GM12878 (cell line): ENCODE measurements at regions of chr5 and their contacts with region 1.

Region 1: DNA sequence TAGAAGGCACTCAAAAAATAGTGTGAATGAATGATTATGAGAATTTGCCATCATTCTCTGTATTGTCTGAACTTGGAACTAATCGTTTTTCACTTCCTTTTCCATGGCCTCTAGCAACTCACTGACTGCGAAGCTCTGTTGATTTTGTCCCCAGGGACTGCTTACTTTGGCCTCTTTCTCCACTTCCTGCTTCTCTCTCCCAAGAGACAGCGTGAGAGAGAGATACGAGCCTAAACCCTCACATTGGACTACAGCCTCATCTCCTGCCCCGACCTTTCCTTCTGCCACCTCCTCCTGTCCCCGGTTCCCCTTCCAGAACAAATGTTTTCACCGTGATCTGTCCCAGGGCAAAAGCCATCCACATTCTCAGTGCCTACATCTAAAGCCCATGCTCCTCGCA is 300.8 kb upstream of the PANK3 start:
- DNase-seq: peak; percentile 83
- ATAC-seq: peak; percentile 92
- H3K4me3 ChIP-seq: no peak overlapping the region
- H3K27ac ChIP-seq: no peak overlapping the region
- H3K4me1 ChIP-seq: peaks cover 5% of the 10 kb centered on the region
- H3K27me3 ChIP-seq: no peaks in the 10 kb centered on the region; a peak in 1 of 4 replicates
- CTCF ChIP-seq: no peak
- EP300 ChIP-seq: peak in 1 of 2 experiments; percentile 65; a peak in 1 of 4 replicates
- POLR2A ChIP-seq: no peak
- RAD21 ChIP-seq: no peak

Region 2: DNA sequence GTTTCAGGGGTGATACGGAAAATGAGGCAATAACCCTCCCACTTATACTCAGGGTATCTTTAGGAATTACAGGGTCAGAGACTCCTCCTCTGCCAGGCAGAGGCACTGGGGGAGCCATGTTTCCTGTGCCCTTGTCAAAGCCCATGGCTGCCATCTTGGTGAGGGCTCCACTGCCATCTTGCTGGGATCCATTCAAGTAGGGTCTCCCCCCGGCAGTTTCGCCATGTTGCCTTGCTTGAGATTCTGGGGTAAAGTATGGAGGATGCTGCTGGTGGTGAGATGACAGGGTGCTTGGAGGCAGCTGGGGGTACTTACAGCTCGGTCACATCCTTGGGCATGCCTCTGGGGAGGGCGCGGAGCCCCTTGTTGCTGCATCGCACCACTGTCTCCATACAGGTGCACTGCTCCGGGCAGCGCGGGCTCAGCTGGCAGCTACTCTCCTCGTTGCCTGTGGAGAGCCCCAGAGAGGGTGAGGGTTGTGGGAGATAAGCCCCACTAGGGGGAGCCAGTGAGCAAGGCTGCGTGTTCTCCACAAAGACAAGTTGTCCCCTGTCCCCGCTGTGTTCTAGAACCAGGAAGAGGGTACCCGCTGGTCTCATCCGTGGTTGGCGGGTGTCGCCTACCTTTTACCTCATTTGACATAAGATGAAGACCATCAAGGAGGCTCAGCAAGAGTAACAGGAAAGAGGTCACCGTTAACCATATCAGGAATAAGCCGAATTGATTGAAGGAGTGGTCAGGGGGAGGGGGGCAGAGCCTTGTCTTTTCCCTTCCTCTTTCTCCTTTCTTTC is 131.7 kb before region 1 on chr5:
- CTCF ChIA-PET with region 1: interaction called, 4 read pairs
- POLR2A ChIA-PET with region 1: interaction called, 3 read pairs
- RAD21 ChIA-PET with region 1: no interaction called
- SMC1A ChIA-PET with region 1: no interaction called
- in situ Hi-C with region 1: no loop called
- intact Hi-C with region 1: loop called (anchors 2 kb)
- DNase-seq: no peak
- ATAC-seq: peak; percentile 95
- H3K4me3 ChIP-seq: no peak overlapping the region
- H3K27ac ChIP-seq: no peak overlapping the region
- H3K4me1 ChIP-seq: no peaks in the 10 kb centered on the region
- H3K27me3 ChIP-seq: no peaks in the 10 kb centered on the region; a peak in 1 of 4 replicates
- CTCF ChIP-seq: peak; percentile 60 to 90 (median 80)
- EP300 ChIP-seq: no peak
- POLR2A ChIP-seq: no peak
- RAD21 ChIP-seq: peak; percentile 36